Left cardiac atrium (tissue), 4 donors: ENCODE measurements at regions of chr16 and their contacts with region 1.

Region 1: DNA sequence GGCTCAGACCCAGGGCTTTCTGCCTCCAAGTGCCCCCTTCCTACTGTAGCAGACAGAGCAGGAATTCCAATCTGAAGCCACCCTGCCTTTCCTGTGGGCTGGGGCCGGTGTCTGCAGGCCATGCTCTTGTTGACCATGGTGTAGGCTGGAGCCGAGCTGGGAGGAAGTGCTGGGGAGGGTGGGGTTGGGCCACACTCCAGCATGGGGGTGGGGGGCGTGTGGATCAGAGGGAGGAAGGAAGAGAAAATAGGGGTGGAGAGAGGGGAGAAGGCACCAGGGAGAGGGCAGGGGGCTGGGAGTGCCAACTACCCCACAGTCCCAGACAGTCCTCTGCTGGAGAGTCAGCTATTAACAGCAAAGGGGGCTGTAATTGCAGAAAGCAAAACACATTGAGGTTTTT is 54.3 kb upstream of the JPH3 start:
- DNase-seq: no peak
- ATAC-seq: no peak

Region 2: DNA sequence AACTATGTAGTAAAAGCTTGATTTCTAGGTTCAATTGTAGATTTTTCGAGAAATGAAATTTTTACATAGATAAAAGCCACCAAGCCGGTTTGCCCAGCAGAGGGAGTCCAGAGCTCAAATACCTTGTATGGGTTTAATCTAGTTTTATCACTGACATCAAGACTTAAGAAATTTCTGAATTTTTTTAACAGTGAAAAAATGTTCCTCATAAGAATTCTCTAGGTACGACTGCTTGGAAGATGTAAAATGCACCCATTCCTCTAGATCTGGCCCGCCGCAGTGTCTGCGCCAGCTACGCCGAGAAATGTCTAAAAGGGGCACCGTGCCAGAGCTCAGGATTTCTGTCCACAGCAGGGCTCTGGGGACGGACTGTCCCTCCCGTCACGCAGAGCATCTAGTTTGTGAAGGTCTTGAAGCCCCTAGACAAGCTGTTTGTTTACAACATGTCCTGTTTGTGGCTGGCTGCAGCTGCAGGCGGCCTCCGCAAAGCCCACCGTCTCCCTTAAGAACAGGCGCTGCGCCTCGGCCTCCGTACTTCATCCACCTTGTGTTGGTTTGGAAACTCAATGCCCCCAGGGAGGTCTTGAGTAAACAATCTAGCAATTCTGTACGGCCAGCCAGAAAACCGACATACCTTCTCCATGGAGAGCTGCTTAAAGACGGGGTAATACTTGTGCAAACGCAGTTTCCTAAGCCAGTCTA is 131.1 kb before region 1 on chr16:
- intact Hi-C with region 1: loop called in 1 of 2 experiments (anchors 5 kb)
- DNase-seq: no peak
- ATAC-seq: no peak

Region 3: GRCh38 chr16:87740909-87741424 is 192.9 kb after region 1 on chr16:
- intact Hi-C with region 1: no loop called
- DNase-seq: no peak
- ATAC-seq: peak; percentile 79 to 86